Naive thymus-derived CD4-positive, alpha-beta T cell (primary cell): ENCODE measurements at regions of chr1 and their contacts with region 1.

Region 1: DNA sequence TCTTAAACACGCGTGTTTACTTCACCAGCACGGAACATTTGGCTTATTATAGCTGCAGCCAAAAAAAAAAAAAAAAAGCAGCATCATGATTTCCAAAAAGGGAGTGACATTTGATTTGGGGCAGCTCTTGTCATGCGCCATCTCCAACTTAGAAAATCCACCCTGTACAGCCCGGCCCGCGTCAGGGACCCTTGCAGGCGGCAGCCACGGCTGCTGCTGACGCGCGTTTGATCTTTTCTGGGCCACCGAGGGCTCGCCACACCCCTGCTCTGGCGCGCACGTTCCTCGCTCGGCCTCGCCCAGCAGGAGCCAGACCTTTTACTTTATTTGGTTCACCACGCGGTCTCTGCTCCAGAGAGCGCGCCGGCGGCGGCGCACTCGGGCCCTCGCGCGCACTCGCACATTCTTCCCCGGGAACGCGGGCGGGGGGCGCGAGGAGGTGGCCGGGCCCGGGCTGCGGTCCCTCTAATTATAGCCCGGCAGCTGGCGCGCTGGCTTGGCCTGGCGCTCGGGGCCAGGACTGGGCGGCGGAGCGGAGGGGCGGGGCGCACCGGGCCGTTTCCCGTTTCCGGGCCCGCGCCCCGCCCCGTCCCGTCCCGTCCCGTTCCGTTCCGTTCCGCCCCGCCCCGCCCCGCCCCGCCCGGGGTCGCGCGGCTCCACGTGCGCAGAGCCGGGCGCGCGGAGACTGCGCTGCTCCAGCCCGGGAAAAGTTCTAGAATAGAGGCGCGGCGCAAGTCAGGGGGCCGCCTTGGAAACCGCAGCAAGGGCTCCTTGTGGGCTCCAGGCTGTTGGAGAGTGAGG is 10.2 kb downstream of the IRF2BP2 start:
- DNase-seq: peak; percentile 52 to 88 (median 62)
- ATAC-seq: peak; percentile 74
- H3K4me3 ChIP-seq: peak overlapping the region; percentile 61
- H3K4me3 Mint-ChIP-seq: peak overlapping the region; percentile 75 to 97 (median 89)
- H3K27ac ChIP-seq: peak overlapping the region; percentile 96
- H3K27ac Mint-ChIP-seq: peak overlapping the region; percentile 87 to 99 (median 95)
- H3K4me1 ChIP-seq: peaks cover 51 to 54% of the 10 kb centered on the region in 2 donors
- H3K4me1 Mint-ChIP-seq: peaks cover 24 to 68% (median 56%) of the 10 kb centered on the region in 7 donors
- H3K27me3 ChIP-seq: no peaks in the 10 kb centered on the region
- H3K27me3 Mint-ChIP-seq: no peaks in the 10 kb centered on the region

Region 2: GRCh38 chr1:234645474-234645953 is 45.7 kb after region 1 on chr1:
- CTCF ChIA-PET with region 1: no interaction called
- POLR2A ChIA-PET with region 1: no interaction called
- intact Hi-C with region 1: no loop called
- DNase-seq: no peak
- ATAC-seq: peak; percentile 72
- H3K4me3 ChIP-seq: no peak overlapping the region
- H3K4me3 Mint-ChIP-seq: no peak overlapping the region
- H3K27ac ChIP-seq: no peak overlapping the region
- H3K27ac Mint-ChIP-seq: no peak overlapping the region
- H3K4me1 ChIP-seq: no peaks in the 10 kb centered on the region
- H3K4me1 Mint-ChIP-seq: peaks cover 0 to 4% (median 0%) of the 10 kb centered on the region in 7 donors
- H3K27me3 ChIP-seq: no peaks in the 10 kb centered on the region
- H3K27me3 Mint-ChIP-seq: peaks cover 0 to 5% (median 0%) of the 10 kb centered on the region in 5 donors

Region 3: DNA sequence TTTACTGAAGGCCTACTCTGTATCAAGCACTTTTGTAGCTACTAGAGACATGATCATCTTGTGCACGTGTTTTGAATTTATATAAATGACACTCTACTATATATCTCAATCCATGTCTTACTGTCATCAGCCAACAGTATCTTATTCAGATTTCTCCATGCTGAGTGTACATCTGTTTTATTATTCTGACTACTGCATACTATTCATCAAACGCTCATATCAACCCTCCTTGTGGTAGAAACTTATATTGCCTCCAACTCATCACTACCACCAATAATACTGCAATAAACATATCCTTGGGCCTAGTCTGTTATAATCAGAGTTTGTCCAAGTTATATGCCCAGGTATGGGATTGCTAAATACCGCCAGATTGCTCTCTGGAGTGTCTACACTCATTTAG is 91.8 kb after region 1 on chr1:
- CTCF ChIA-PET with region 1: no interaction called
- POLR2A ChIA-PET with region 1: interaction called, 3 read pairs
- intact Hi-C with region 1: loop called in 1 of 2 experiments (anchors 1 kb)
- DNase-seq: peak in 6 of 9 donors; percentile 8 to 41 (median 28)
- ATAC-seq: peak; percentile 69
- H3K4me3 ChIP-seq: no peak overlapping the region
- H3K4me3 Mint-ChIP-seq: no peak overlapping the region
- H3K27ac ChIP-seq: no peak overlapping the region
- H3K27ac Mint-ChIP-seq: peak overlapping the region in 3 of 9 donors; percentile 4 to 7 (median 5)
- H3K4me1 ChIP-seq: no peaks in the 10 kb centered on the region
- H3K4me1 Mint-ChIP-seq: peaks cover 0 to 7% (median 4%) of the 10 kb centered on the region in 7 donors
- H3K27me3 ChIP-seq: no peaks in the 10 kb centered on the region
- H3K27me3 Mint-ChIP-seq: peaks cover 0 to 4% (median 0%) of the 10 kb centered on the region in 5 donors

Region 4: DNA sequence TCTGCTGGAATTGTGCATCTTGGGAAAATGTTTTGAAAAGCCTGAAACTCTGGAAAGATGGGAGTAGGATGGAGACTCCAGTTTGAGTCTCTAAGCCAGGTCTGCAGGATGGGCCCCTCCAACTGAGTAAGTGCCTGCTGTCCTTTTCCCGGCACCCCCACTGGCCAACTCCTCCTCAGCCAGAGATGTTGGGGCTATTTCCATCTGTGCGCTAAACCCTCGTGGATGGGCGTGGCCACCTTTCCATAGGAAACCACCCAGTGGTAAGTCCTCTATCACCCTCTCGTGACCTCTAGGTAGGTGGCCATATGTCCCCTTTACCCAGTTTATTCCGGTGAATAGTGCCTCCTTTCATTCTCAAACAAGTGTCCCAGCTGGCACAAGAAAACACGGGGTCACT is 277.9 kb after region 1 on chr1:
- CTCF ChIA-PET with region 1: interaction called, 5 read pairs
- POLR2A ChIA-PET with region 1: no interaction called
- intact Hi-C with region 1: loop called in 1 of 2 experiments (anchors 1 kb)
- DNase-seq: no peak
- ATAC-seq: no peak
- H3K4me3 ChIP-seq: no peak overlapping the region
- H3K4me3 Mint-ChIP-seq: no peak overlapping the region
- H3K27ac ChIP-seq: no peak overlapping the region
- H3K27ac Mint-ChIP-seq: no peak overlapping the region
- H3K4me1 ChIP-seq: no peaks in the 10 kb centered on the region
- H3K4me1 Mint-ChIP-seq: peaks cover 6 to 47% (median 16%) of the 10 kb centered on the region in 7 donors
- H3K27me3 ChIP-seq: no peaks in the 10 kb centered on the region
- H3K27me3 Mint-ChIP-seq: no peaks in the 10 kb centered on the region

Region 5: DNA sequence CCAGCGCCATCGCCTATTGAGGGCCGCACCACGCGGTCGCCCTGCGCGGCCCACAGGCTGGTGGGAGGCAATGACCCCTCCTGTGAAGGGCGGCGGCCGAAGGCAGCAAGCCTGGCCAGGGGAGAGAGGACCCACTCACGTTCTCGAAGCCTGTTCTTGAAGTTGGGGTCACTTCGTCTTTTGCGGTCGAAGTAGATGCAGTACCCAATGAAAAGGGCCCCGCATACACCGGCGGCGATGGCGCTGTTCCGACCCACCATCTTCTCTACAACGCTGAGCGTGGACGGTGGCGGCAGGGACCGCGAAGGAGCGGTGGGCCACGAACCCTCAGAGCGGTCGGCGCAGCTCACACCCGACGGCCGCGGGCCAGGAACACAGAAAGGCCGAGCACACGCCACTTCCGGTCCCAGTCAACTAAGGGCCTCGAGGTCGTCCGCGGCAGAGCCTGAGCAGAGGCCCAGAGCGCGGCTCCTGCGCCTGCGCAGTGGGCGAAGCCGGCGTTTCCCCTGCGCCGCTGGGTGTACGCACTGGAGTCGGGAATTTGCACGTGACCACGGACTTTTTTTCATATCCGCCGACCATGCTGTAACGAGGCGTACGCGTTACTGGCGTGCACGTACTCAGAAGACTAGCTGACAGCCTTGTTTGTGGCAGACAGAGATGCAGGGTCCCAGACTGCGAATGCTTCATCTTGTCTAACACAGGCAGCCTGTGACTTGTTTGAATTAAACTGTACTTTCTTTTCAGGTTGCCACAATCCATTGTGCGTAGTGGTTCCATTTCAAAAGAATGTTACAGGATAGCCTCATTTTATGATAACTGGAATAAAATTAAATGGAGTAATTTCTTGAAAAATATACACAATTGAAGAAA is 528.9 kb after region 1 on chr1 and contains the start of gene TOMM20:
- CTCF ChIA-PET with region 1: no interaction called
- POLR2A ChIA-PET with region 1: no interaction called
- intact Hi-C with region 1: loop called (anchors 2 kb)
- DNase-seq: peak; percentile 91 to 97 (median 95)
- ATAC-seq: peak; percentile 97
- H3K4me3 ChIP-seq: peak within 1 kb of the TSS; percentile 98
- H3K4me3 Mint-ChIP-seq: peak within 1 kb of the TSS; percentile 88 to 99 (median 96)
- H3K27ac ChIP-seq: peak within 1 kb of the TSS; percentile 94
- H3K27ac Mint-ChIP-seq: peak within 1 kb of the TSS; percentile 93 to 99 (median 98)
- H3K4me1 ChIP-seq: peaks cover 22 to 24% of the 10 kb centered on the region in 2 donors
- H3K4me1 Mint-ChIP-seq: peaks cover 17 to 55% (median 42%) of the 10 kb centered on the region in 7 donors
- H3K27me3 ChIP-seq: no peaks in the 10 kb centered on the region
- H3K27me3 Mint-ChIP-seq: no peaks in the 10 kb centered on the region
- total RNA-seq, gene TOMM20: 88.0 to 124 (median 100) TPM